Ascending aorta (tissue), 2 donors: ENCODE measurements at regions of chr7 and their contacts with region 1.

Region 1: GRCh38 chr7:66844552-66845378 is 76.3 kb upstream of the TMEM248 start:
- DNase-seq: peak; percentile 89 to 99
- H3K4me3 ChIP-seq: peak overlapping the region; percentile 69 to 78
- H3K27ac ChIP-seq: peak overlapping the region; percentile 94 to 96
- H3K4me1 ChIP-seq: peaks cover 0 to 9% of the 10 kb centered on the region in 2 donors
- H3K27me3 ChIP-seq: no peaks in the 10 kb centered on the region
- CTCF ChIP-seq: peak; percentile 16 to 51 (median 29)

Region 2: DNA sequence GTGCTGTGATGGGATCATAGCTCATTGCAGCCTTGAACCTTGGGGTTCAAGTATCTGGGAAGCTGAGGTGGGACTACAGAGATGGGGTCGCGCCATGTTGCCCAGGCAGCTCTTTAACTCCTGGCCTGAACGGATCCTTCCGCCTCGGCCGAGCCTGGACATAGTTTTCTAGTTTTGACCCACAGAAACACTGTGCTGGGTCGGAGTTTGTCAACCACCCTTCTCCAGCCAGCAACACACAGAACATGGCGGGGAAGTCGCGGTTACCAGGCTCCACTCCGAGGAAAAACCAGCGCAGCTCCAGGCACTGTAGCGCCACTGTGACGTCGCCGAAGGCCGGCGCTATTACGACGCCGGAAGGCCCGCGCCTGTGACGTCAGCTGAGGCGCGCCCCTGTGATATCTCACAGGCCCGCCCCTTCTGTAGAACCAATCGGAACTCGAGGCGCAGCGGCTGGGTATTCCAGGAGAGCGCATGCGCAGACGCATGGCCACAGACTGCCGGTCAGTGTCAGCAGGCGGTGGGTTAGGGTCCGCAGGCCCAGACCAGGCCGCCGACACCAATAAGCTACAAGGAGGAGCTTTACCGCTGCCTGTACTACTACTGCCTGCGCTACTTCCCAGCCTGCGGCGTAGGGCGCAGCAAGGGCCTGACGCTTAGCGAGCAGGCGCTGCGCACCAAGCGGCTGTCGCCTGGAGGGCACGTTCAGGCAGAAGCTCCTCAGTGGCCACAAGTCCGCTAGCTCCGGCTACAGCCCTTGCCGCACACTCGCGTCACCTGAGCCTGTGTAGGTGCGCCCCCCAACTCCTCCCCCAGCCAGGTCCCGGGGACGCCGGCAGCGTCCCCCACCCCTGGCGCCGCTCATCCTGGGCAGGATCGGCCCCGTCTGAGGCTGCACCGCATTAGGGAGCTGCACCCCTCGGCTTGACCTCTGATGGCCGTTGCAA is 351.3 kb before region 1 on chr7:
- intact Hi-C with region 1: loop called (anchors 2 kb)
- DNase-seq: peak; percentile 89 to 99
- H3K4me3 ChIP-seq: peak overlapping the region; percentile 61 to 76
- H3K27ac ChIP-seq: peak overlapping the region; percentile 89 to 94
- H3K4me1 ChIP-seq: peaks cover 0 to 6% of the 10 kb centered on the region in 2 donors
- H3K27me3 ChIP-seq: no peaks in the 10 kb centered on the region
- CTCF ChIP-seq: peak; percentile 29 to 54 (median 38)

Region 3: GRCh38 chr7:66591799-66592596 is 252.8 kb before region 1 on chr7:
- intact Hi-C with region 1: loop called (anchors 2 kb)
- DNase-seq: peak; percentile 67 to 95
- H3K4me3 ChIP-seq: peak overlapping the region; percentile 76 to 95
- H3K27ac ChIP-seq: peak overlapping the region; percentile 94 to 99
- H3K4me1 ChIP-seq: peaks cover 0 to 15% of the 10 kb centered on the region in 2 donors
- H3K27me3 ChIP-seq: no peaks in the 10 kb centered on the region
- CTCF ChIP-seq: no peak

Region 4: GRCh38 chr7:66740302-66740979 is 104.3 kb before region 1 on chr7 and contains the start of gene RABGEF1:
- intact Hi-C with region 1: loop called (anchors 1 kb)
- DNase-seq: peak; percentile 83 to 99
- H3K4me3 ChIP-seq: peak within 1 kb of the TSS; percentile 76 to 86
- H3K27ac ChIP-seq: peak within 1 kb of the TSS; percentile 94 to 100
- H3K4me1 ChIP-seq: peaks cover 0 to 15% of the 10 kb centered on the region in 2 donors
- H3K27me3 ChIP-seq: no peaks in the 10 kb centered on the region
- CTCF ChIP-seq: peak in 1 of 3 experiments; percentile 21
- total RNA-seq, gene RABGEF1: 31.6 TPM

Region 5: DNA sequence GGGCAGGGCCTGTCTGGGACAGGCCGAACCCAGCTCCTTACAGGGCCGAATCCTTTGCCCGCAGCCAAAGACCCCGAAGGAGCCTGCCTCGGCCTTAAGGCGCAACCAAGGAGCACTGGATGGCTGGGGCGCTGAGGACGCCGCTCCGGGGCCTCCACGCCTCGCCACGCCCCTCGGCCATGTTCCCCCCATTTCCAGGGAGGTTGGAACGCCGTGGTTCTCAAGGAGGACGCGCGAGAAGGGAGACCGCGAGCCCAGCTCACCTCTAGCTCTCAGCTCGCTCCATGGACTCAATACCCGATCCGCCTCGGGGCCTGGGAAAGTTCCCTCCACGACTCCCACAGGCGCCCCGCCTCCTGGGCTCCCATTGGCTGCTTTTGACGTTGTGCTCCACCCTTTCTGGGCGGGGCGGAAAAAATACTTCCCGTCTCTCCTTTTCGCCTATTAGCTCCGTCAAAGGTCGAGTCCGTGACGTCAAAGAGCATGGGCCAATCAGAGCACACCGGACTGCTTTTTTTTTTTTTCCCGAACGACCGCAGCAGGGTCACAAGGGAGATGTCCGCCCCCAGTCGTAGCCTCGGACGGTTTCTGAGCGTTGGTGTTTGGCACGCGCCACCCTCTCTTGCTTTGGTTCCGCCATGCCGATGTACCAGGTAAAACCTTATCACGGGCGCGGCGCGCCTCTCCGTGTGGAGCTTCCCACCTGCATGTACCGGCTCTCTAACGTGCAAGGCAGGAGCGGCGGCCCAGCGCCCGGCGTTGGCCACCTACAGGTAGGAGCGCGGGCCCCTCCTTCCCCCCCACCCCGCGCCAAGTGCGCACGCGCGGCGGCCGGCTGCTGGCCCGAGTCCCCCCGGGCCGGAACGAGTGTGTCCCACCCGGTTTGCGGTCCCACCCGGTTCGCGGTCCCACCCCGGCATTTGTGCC is 457.6 kb after region 1 on chr7:
- intact Hi-C with region 1: loop called (anchors 10 kb)
- DNase-seq: peak; percentile 97 to 100
- H3K4me3 ChIP-seq: peak overlapping the region; percentile 62 to 79
- H3K27ac ChIP-seq: peak overlapping the region; percentile 87 to 90
- H3K4me1 ChIP-seq: peaks cover 0 to 10% of the 10 kb centered on the region in 2 donors
- H3K27me3 ChIP-seq: no peaks in the 10 kb centered on the region
- CTCF ChIP-seq: peak; percentile 20 to 45 (median 41)